ENCODE measurements at regions of chr11 and their contacts with region 1.

Region 1: GRCh38 chr11:118689851-118690552 is 10.6 kb upstream of the TREH start:
- DNase-seq: peak; percentile 98 to 99 (median 98)
- ATAC-seq: peak; percentile 95 to 98 (median 98)
- H3K4me3 ChIP-seq: peak overlapping the region; percentile 34 to 38 (median 35)
- H3K27ac ChIP-seq: peak overlapping the region; percentile 74 to 88 (median 85)
- H3K4me1 ChIP-seq: peaks cover 0 to 9% (median 0%) of the 10 kb centered on the region in 4 donors
- H3K27me3 ChIP-seq: no peaks in the 10 kb centered on the region
- CTCF ChIP-seq: peak; percentile 77 to 94 (median 86)
- POLR2A ChIP-seq: no peak

Region 2: DNA sequence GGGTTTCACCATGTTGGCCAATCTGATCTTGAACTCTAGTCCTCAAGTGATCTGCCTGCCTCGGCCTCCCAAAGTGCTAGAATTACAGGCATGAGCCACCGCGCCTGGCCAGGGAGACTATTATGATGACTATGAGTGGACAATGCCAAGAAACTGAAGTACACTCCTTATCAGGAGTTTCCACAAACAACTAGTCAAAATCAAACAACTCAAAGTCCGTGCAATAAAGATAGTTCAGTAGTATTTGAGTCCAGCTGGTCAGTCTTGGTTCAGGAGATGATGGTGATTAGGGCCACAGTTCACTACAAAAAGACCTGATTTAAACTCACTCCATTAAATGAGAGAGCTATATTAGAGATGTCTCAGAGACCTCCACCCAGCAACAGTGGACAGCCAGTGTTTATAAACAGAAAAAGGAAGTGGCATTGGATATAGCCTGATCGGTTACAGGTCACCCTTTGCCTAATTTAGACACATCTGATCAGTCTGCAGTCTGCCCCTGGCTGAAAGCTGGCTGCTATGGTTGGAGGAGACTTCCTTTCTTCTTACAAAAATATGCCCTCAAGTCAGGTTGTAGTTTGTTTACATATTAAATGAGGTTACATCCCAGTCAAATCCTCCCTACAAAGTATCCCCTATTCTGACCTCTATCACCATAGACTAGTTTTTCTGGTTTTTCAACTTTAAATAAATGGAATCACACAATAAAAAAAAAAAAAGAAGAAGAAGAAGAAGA is 368.4 kb before region 1 on chr11:
- intact Hi-C with region 1: no loop called
- DNase-seq: peak; percentile 52 to 83 (median 78)
- ATAC-seq: peak; percentile 87 to 95 (median 91)
- H3K4me3 ChIP-seq: no peak overlapping the region
- H3K27ac ChIP-seq: peak overlapping the region in 2 of 3 donors; percentile 44 to 47
- H3K4me1 ChIP-seq: peaks cover 0 to 14% (median 7%) of the 10 kb centered on the region in 4 donors
- H3K27me3 ChIP-seq: no peaks in the 10 kb centered on the region
- CTCF ChIP-seq: no peak
- POLR2A ChIP-seq: no peak

Region 3: DNA sequence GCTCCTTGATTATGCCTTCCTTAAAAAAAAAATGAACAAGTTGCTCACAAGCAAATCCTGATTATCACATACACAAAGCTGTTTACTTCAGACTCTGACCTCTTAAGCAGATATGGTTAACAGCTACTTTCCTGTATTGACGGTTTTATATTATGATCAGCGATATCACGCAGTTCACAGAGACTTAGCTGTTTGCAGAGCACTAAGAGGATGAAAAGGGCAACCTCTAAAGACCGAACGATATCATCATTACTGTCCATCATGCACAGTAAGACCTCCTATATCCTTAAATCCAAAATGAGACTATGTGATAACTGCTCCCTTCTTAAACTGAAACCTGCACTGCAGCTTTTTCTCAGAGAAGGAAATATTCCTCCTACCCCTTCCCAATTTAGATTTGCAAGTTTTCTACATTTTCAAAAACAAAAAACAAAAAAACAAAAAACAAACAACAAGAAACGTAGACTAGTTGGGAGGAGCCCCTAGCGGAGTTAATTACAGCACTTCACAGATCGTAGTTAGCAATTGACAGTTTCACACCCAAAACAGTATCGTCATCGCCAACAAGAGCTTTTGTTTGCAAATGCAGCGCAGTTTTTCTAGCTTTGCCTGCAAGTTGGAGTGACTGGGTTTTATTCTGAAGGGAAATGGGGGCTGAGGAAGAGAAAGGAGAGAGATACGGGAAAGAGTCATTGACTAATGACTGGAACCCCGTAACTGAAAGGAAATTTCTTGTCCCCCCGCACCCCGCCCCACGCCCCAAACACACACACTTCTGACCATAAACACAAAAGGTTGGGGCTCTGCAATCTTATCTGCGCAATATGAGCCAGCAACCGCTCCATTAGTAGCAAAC is 99.7 kb after region 1 on chr11:
- intact Hi-C with region 1: loop called in 1 of 2 experiments (anchors 10 kb)
- DNase-seq: no peak
- ATAC-seq: peak in 1 of 4 donors; percentile 1
- H3K4me3 ChIP-seq: peak overlapping the region; percentile 73 to 93 (median 91)
- H3K27ac ChIP-seq: peak overlapping the region; percentile 97 to 100 (median 99)
- H3K4me1 ChIP-seq: peaks cover 0 to 48% (median 7%) of the 10 kb centered on the region in 4 donors
- H3K27me3 ChIP-seq: no peaks in the 10 kb centered on the region
- CTCF ChIP-seq: no peak
- POLR2A ChIP-seq: no peak

Region 4: GRCh38 chr11:118907051-118908042 is 217.3 kb after region 1 on chr11:
- intact Hi-C with region 1: loop called in 1 of 2 experiments (anchors 10 kb)
- DNase-seq: peak; percentile 82 to 90 (median 87)
- ATAC-seq: peak; percentile 86 to 92 (median 88)
- H3K4me3 ChIP-seq: no peak overlapping the region
- H3K27ac ChIP-seq: no peak overlapping the region
- H3K4me1 ChIP-seq: peaks cover 0 to 17% (median 8%) of the 10 kb centered on the region in 4 donors
- H3K27me3 ChIP-seq: no peaks in the 10 kb centered on the region
- CTCF ChIP-seq: peak; percentile 93 to 98 (median 96)
- POLR2A ChIP-seq: no peak

Region 5: GRCh38 chr11:118956094-118956846 is 266.3 kb after region 1 on chr11 and contains the start of gene UPK2:
- intact Hi-C with region 1: loop called in 1 of 2 experiments (anchors 10 kb)
- DNase-seq: peak; percentile 90 to 91 (median 90)
- ATAC-seq: peak; percentile 98 to 100 (median 99)
- H3K4me3 ChIP-seq: no peak within 1 kb of the TSS
- H3K27ac ChIP-seq: no peak within 1 kb of the TSS
- H3K4me1 ChIP-seq: no peaks in the 10 kb centered on the region
- H3K27me3 ChIP-seq: no peaks in the 10 kb centered on the region
- CTCF ChIP-seq: peak; percentile 96 to 99 (median 97)
- POLR2A ChIP-seq: no peak
- total RNA-seq, gene UPK2: not detected